Natural killer cell (primary cell): ENCODE measurements at regions of chr6 and their contacts with region 1.

Region 1: GRCh38 chr6:144095331-144096002 is at the start of gene SF3B5:
- DNase-seq: peak; percentile 96 to 100
- ATAC-seq: peak; percentile 96 to 99 (median 97)
- H3K4me3 ChIP-seq: peak within 1 kb of the TSS; percentile 88
- H3K4me3 Mint-ChIP-seq: peak within 1 kb of the TSS; percentile 94
- H3K27ac ChIP-seq: peak within 1 kb of the TSS; percentile 90
- H3K27ac Mint-ChIP-seq: peak within 1 kb of the TSS; percentile 95 to 97
- H3K4me1 ChIP-seq: peaks cover 17% of the 10 kb centered on the region
- H3K4me1 Mint-ChIP-seq: peaks cover 23 to 28% of the 10 kb centered on the region in 2 donors
- H3K27me3 ChIP-seq: no peaks in the 10 kb centered on the region
- H3K27me3 Mint-ChIP-seq: no peaks in the 10 kb centered on the region
- CTCF ChIP-seq: no peak
- total RNA-seq, gene SF3B5: 122 to 145 (median 122) TPM

Region 2: DNA sequence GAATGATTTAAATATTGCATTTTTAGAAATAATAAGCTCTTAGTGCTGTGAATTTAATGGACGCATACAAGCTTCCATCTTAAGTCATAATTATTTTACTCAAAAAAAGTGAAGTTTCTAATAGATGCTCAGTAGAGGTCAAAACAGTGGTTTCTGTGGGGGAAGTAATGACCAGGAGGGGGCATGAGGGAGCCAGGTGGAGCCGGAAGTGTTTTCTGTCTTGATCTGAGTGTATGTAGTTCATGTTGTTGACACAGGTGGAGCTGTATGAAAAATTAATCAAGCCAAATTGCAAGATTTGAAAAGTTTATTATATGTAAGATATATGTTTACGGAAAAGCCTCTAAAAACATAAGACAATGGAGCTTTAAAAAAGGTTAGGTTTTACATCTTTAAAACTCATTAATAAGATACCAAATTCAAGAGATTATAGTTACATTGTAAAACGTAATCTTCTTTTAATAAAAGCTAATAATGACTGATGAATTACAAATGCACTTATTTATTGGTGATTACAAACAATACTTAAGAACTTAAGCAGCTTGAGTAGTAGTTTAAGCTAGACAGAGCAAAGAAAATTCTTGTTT is 155.4 kb before region 1 on chr6:
- intact Hi-C with region 1: loop called (anchors 2 kb)
- DNase-seq: peak; percentile 30 to 78
- ATAC-seq: peak; percentile 84 to 98 (median 96)
- H3K4me3 ChIP-seq: no peak overlapping the region
- H3K4me3 Mint-ChIP-seq: no peak overlapping the region
- H3K27ac ChIP-seq: no peak overlapping the region
- H3K27ac Mint-ChIP-seq: no peak overlapping the region
- H3K4me1 ChIP-seq: peaks cover 7% of the 10 kb centered on the region
- H3K4me1 Mint-ChIP-seq: peaks cover 10 to 15% of the 10 kb centered on the region in 2 donors
- H3K27me3 ChIP-seq: no peaks in the 10 kb centered on the region
- H3K27me3 Mint-ChIP-seq: no peaks in the 10 kb centered on the region
- CTCF ChIP-seq: peak; percentile 76

Region 3: GRCh38 chr6:144055121-144055931 is 40.1 kb before region 1 on chr6:
- intact Hi-C with region 1: loop called (anchors 2 kb)
- DNase-seq: peak in 1 of 2 donors; percentile 78
- ATAC-seq: peak; percentile 92 to 98 (median 93)
- H3K4me3 ChIP-seq: peak overlapping the region; percentile 39
- H3K4me3 Mint-ChIP-seq: peak overlapping the region; percentile 87
- H3K27ac ChIP-seq: peak overlapping the region; percentile 77
- H3K27ac Mint-ChIP-seq: peak overlapping the region; percentile 84 to 98
- H3K4me1 ChIP-seq: peaks cover 12% of the 10 kb centered on the region
- H3K4me1 Mint-ChIP-seq: peaks cover 29 to 31% of the 10 kb centered on the region in 2 donors
- H3K27me3 ChIP-seq: no peaks in the 10 kb centered on the region
- H3K27me3 Mint-ChIP-seq: no peaks in the 10 kb centered on the region
- CTCF ChIP-seq: no peak

Region 4: DNA sequence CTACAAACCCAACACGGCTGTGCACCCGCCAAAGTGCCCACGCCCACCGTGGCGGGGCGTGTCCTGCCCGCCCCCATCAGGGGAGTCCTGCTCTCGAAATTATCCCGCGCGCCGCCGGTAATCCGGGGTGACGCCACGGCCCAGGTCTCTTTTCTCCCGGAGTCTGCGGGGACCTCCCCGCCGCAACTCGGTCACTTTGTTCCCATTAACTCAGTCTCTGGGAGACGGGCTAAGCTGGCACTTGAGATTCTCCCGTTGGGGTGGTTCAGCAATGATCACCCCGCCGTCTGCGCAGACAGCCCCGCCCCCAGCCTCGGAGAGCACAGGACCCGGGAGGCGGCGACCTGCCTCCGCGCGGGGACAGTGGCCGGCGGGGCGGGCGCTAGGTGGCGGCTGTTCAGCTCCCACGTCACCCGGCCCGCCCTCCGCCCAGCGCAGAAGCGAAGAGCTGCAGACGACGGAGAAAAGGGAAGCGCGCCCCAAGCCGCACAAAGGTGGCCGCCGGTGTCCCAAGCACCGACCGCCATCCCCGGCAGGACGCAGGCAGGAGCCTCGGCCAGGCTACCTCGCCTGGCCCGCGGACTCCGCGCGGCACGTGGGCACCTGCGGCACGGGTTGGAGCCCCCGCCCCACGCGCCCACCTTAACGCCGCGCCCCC is 31.6 kb before region 1 on chr6:
- intact Hi-C with region 1: loop called (anchors 1 kb)
- DNase-seq: peak; percentile 87 to 94
- ATAC-seq: peak; percentile 94 to 98 (median 96)
- H3K4me3 ChIP-seq: peak overlapping the region; percentile 83
- H3K4me3 Mint-ChIP-seq: peak overlapping the region; percentile 95
- H3K27ac ChIP-seq: peak overlapping the region; percentile 83
- H3K27ac Mint-ChIP-seq: peak overlapping the region; percentile 87 to 92
- H3K4me1 ChIP-seq: peaks cover 18% of the 10 kb centered on the region
- H3K4me1 Mint-ChIP-seq: peaks cover 19 to 24% of the 10 kb centered on the region in 2 donors
- H3K27me3 ChIP-seq: no peaks in the 10 kb centered on the region
- H3K27me3 Mint-ChIP-seq: peaks cover 10 to 17% of the 10 kb centered on the region in 2 donors
- CTCF ChIP-seq: no peak

Region 5: DNA sequence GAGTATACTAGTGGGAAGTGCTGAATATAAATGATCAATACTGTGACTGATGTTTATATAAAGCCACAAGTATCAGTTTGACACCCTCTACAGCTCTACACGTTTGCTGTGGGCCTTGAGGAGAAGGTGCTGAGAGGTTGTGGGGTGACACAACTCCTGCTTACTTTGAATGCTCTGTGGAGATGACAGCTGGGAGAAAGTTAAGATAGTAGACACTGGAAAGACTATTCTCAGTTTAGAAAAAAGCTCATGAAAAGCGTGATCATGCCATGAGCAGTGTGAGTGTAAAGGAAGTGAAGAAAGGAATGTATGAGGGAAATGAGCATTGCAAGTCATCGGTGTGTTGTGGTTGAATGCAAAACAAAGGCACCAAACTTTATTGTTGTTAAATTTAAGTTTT is 405.4 kb after region 1 on chr6:
- intact Hi-C with region 1: no loop called
- DNase-seq: no peak
- ATAC-seq: peak; percentile 30 to 62 (median 42)
- H3K4me3 ChIP-seq: no peak overlapping the region
- H3K4me3 Mint-ChIP-seq: no peak overlapping the region
- H3K27ac ChIP-seq: peak overlapping the region; percentile 25
- H3K27ac Mint-ChIP-seq: peak overlapping the region; percentile 53 to 87
- H3K4me1 ChIP-seq: no peaks in the 10 kb centered on the region
- H3K4me1 Mint-ChIP-seq: peaks cover 61 to 66% of the 10 kb centered on the region in 2 donors
- H3K27me3 ChIP-seq: no peaks in the 10 kb centered on the region
- H3K27me3 Mint-ChIP-seq: no peaks in the 10 kb centered on the region
- CTCF ChIP-seq: no peak